ENCODE measurements at regions of chr6 and their contacts with region 1.

Region 1: GRCh38 chr6:143510991-143511891 is at the start of gene FUCA2:
- DNase-seq: peak; percentile 87
- ATAC-seq: peak; percentile 96
- H3K4me3 ChIP-seq: peak within 1 kb of the TSS; percentile 64 to 87 (median 72)
- H3K27ac ChIP-seq: peak within 1 kb of the TSS; percentile 78
- H3K4me1 ChIP-seq: peaks cover 47% of the 10 kb centered on the region
- H3K27me3 ChIP-seq: peaks cover 2 to 6% of the 10 kb centered on the region in 2 experiments; a peak in 1 of 5 replicates
- CTCF ChIP-seq: peak; percentile 32
- EP300 ChIP-seq: peak; percentile 17 to 34; a peak in 2 of 4 replicates
- POLR2A ChIP-seq: peak; percentile 96
- RAD21 ChIP-seq: peak; percentile 65; the same call in 1 of the 2 replicates
- total RNA-seq, gene FUCA2: 60.9 and 144 TPM in 2 replicates

Region 2: GRCh38 chr6:143136647-143137046 is 374.6 kb before region 1 on chr6:
- CTCF ChIA-PET with region 1: no interaction called
- POLR2A ChIA-PET with region 1: no interaction called
- in situ Hi-C with region 1: no loop called
- intact Hi-C with region 1: no loop called
- DNase-seq: no peak
- ATAC-seq: peak; percentile 34; the same call in 1 of the 3 replicates
- H3K4me3 ChIP-seq: no peak overlapping the region
- H3K27ac ChIP-seq: no peak overlapping the region
- H3K4me1 ChIP-seq: no peaks in the 10 kb centered on the region
- H3K27me3 ChIP-seq: no peaks in the 10 kb centered on the region
- CTCF ChIP-seq: no peak
- EP300 ChIP-seq: no peak
- POLR2A ChIP-seq: no peak
- RAD21 ChIP-seq: no peak

Region 3: GRCh38 chr6:143322386-143322785 is 188.9 kb before region 1 on chr6:
- CTCF ChIA-PET with region 1: no interaction called
- POLR2A ChIA-PET with region 1: no interaction called
- in situ Hi-C with region 1: no loop called
- intact Hi-C with region 1: no loop called
- DNase-seq: no peak
- ATAC-seq: no peak
- H3K4me3 ChIP-seq: no peak overlapping the region
- H3K27ac ChIP-seq: no peak overlapping the region
- H3K4me1 ChIP-seq: no peaks in the 10 kb centered on the region
- H3K27me3 ChIP-seq: no peaks in the 10 kb centered on the region
- CTCF ChIP-seq: no peak
- EP300 ChIP-seq: no peak
- POLR2A ChIP-seq: no peak
- RAD21 ChIP-seq: no peak

Region 4: DNA sequence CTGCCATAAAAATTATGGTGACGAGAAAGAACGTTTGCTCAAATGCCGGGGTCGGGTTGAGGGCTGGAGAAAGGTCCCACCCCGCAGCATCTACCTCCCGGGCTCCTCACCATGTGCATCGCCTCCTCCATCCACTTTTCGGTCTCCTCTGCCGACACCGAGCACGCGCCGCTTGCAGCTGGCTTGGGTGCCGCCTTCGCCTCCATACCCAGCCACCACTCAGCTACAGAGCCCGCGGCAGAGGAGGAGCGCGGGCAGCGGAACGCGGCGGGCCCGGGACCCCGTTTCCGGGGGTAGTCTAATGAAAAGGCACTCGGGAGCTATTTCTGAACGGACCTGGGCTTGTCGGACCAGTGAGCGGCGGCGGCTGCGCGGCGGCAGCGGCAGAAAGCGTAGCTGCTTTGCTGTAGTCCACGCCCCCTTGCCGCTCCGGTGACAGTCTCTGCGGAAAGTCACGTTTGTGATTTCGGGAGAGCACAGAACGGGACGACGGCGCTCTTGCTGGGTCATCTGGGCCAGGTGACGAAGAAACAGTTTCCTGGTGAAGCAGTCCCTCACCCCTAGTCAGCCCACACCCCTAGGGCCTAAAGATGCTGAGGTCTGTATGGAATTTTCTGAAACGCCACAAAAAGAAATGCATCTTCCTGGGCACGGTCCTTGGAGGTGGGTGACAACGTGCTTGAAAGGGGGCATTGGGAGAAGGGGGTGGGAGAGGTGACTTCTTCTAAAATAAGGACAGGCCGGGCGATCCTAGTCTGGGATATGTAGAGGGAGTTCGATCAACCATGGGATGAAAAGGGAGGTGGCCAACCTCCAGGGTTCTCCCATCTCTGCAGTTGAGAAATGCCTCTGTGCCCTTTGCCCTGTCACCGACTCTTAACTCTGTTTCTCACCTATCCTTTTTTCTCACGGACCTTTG is 60.5 kb before region 1 on chr6 and contains the starts of genes ADAT2 and PEX3:
- CTCF ChIA-PET with region 1: no interaction called
- POLR2A ChIA-PET with region 1: interaction called, 4 read pairs
- in situ Hi-C with region 1: no loop called
- intact Hi-C with region 1: loop called (anchors 2 kb)
- DNase-seq: peak; percentile 93
- ATAC-seq: peak; percentile 99
- H3K4me3 ChIP-seq: peak within 1 kb of the TSS; percentile 73 to 96 (median 92)
- H3K27ac ChIP-seq: peak within 1 kb of the TSS; percentile 86
- H3K4me1 ChIP-seq: peaks cover 36% of the 10 kb centered on the region
- H3K27me3 ChIP-seq: no peaks in the 10 kb centered on the region; a peak in 2 of 5 replicates
- CTCF ChIP-seq: peak; percentile 39; the same call in 1 of the 2 replicates
- EP300 ChIP-seq: peak; percentile 66 to 87; a peak in 3 of 4 replicates
- POLR2A ChIP-seq: peak; percentile 90 to 91
- RAD21 ChIP-seq: peak; percentile 91
- total RNA-seq, gene ADAT2: 15.0 and 18.3 TPM in 2 replicates
- total RNA-seq, gene PEX3: 40.8 and 50.5 TPM in 2 replicates

Region 5: GRCh38 chr6:143536865-143537691 is 25.8 kb after region 1 on chr6:
- CTCF ChIA-PET with region 1: interaction called, 3 read pairs
- POLR2A ChIA-PET with region 1: interaction called, 38 read pairs
- in situ Hi-C with region 1: no loop called
- intact Hi-C with region 1: loop called (anchors 1 kb)
- DNase-seq: peak; percentile 38
- ATAC-seq: peak; percentile 82
- H3K4me3 ChIP-seq: peak overlapping the region; percentile 68 to 80 (median 69)
- H3K27ac ChIP-seq: no peak overlapping the region
- H3K4me1 ChIP-seq: peaks cover 32% of the 10 kb centered on the region
- H3K27me3 ChIP-seq: peaks cover 0 to 25% of the 10 kb centered on the region in 2 experiments; a peak in 4 of 5 replicates
- CTCF ChIP-seq: peak; percentile 69
- EP300 ChIP-seq: no peak
- POLR2A ChIP-seq: no peak
- RAD21 ChIP-seq: peak; percentile 38; the same call in 1 of the 2 replicates